Head of caudate nucleus (tissue), 42 donors: ENCODE measurements at regions of chr14 and their contacts with region 1.

Region 1: DNA sequence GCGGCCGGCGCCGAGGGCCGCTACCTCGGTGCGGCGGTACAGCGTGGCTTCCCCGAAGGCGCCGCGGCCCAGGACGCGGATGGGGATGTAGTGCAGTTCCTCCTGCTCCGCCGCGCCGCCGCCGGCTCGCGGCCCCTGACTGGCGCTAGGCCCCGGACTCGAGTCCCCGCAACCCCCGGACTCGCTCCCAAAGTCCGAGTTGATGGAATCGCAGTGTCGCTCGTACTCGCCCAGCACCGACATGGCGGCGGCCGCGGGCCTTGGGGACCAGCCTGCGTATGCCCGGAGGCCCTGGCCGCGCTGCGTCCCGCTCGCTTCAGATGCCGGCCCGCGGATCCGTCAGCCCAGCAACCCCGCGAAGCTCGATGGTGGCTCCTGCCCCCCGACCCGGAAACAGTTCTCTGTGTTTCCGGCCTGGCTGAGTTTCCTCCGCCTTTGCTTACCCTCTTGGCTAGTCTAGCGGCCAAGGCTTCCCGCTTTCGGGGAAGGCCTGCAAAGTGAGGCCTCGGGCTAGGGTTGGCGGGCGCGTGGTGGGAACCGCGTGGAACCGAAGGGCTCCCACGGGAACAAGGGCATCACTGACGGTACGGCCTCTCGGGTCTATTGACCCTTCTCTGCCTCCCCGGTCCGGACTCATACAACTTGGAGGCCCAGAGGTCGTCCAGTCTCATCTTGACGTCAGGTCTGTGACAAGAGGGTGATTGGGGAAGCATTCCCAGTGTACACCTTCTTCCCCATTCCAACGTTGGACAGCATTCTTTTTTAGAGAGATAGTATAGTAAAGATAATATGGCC is at the start of gene NEK9:
- DNase-seq: peak; percentile 87 to 98 (median 94)

Region 2: DNA sequence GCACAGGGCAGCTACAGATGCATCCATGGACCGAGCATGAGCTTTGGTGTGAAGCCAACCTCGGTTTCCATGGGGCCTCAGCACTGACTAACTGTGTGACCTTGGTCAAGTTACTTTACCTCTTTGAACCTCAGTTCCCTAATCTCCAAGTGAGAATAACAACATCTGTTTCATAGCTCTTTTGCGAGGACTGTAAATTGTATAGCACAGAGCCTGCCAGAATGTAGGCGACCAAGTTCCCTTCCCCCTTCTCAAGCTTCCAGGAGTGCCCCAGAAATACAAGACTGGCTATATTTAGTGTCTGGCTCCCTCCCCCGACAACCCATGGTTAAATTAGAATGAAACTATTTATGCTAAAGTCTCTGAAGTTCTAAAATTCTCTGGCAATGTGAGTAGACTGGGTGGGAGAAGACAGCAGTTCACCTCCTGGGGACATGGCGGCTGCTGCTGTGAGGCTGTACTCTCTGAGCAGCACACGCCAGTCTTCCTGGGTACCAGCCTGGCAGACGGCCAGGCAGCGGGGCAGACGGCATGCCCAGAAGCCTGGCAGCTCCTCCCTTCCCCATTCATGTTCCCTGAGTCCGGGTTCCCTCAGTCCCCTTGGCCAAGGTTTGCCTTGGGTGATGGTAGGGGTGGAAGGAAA is 71.5 kb after region 1 on chr14:
- intact Hi-C with region 1: no loop called
- DNase-seq: peak in 36 of 42 donors; percentile 12 to 68 (median 36)

Region 3: GRCh38 chr14:75487155-75487671 is 360.3 kb after region 1 on chr14:
- intact Hi-C with region 1: loop called (anchors 10 kb)
- DNase-seq: no peak